ENCODE measurements at regions of chr11 and their contacts with region 1.

Region 1: DNA sequence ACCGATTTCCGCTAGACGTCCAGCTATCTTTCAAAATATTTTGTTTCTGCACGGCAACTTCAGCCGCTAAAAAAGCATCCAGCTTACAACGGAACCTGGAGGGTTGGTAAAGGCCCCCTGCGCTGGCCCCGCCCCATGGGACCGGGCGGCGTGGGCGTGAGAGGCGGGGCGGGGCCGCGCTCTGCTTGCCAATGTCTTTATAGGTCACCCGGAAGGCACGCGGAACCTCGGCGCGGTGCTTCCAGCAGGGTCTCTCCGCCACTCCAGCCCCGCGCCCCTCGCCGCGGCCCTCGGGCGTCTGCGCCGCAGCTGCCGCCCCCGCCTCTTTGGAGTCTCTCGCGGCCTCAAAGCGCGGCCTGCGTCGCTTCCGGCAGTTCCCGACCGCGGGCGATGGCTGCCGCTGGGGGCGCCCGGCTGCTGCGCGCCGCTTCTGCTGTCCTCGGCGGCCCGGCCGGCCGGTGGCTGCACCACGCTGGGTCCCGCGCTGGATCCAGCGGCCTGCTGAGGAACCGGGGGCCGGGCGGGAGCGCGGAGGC is at the start of gene FDX1:
- DNase-seq: peak; percentile 78 to 86 (median 85)
- H3K4me3 ChIP-seq: peak within 1 kb of the TSS; percentile 79
- H3K27ac ChIP-seq: peak within 1 kb of the TSS; percentile 91 to 95
- H3K4me1 ChIP-seq: peaks cover 2% of the 10 kb centered on the region
- H3K27me3 ChIP-seq: no peaks in the 10 kb centered on the region
- CTCF ChIP-seq: peak; percentile 34 to 93 (median 80)
- EP300 ChIP-seq: no peak
- POLR2A ChIP-seq: peak; percentile 42
- total RNA-seq, gene FDX1: 9.7 to 16.6 (median 13.1) TPM

Region 2: DNA sequence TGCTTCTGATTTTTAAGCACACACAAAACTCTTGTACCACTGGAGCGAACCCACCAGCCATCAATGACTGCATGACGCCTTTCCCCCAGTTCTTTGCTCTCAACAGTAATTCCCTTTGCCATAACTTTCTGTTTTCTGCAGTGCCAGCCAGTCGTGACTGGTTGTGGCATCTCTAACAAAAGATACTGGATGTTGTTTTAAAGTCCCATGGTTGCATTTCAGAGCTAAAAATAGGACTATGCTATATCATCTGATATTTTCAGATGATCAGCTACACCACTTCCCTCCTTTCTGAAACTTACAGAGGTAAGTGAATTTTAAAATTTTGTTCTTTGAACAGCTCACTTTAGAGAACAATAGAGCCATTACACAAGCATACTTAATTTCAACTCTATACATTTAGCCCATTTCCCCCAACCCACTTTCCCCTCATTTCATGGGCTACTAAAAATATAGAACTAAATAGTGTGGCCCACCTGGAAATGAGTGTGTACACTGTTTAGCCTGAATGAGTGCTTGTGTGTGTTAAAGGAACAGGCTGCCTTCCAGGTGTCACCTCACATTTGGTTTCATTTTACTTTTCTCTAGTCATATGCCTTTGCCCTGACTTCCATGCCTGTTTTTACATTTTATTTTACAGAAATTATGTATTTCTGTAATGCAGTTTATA is 473.5 kb before region 1 on chr11:
- intact Hi-C with region 1: loop called in 1 of 4 experiments (anchors 10 kb)
- DNase-seq: no peak
- H3K4me3 ChIP-seq: no peak overlapping the region
- H3K27ac ChIP-seq: no peak overlapping the region
- H3K4me1 ChIP-seq: peaks cover 4% of the 10 kb centered on the region
- H3K27me3 ChIP-seq: no peaks in the 10 kb centered on the region
- CTCF ChIP-seq: no peak
- EP300 ChIP-seq: no peak
- POLR2A ChIP-seq: no peak

Region 3: DNA sequence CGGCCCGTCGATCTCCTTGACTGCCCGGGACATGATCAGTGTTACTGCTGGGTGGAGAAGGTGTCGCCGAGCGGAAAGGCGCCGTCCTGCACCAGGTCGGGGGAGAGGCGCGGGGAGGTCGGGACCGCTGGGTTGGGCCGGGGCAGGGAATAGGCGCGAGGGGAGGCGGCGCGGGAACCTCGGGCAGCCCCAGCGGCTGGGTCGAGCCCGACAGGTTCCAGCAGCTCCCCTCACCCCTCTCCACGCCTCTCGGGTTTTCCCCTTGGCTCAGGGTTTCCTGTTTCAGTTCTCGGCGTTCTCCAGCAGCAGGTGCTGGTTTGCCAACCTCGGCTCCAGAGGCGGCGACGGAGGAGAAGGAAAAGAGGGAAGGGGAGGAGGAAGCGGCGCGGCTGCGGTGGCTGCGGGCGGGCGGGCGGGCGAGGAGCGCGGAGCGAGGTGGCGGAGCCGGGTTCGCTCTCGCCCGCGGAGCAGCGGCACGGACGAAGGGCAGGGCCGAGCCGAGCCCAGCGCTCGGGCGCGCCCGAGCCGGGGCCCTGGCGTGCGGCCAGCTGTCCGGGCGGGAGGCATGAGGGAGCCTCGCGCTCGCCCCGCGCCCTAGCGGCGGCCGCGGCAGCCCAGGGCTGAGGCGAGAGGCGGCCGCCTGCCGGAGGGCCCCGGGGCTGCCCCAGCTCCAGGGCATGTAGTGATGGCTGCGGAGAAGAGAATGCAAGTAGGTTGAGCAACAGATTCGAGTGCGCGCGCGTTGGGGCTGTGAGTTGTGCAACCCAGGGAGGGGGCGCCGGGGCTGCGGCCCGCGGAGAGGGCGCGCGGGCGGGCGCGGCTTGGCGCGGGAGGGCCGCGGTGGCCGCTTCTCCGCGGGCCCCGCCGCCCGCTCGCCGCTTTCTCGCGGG is 337.0 kb before region 1 on chr11 and contains the start of gene ZC3H12C:
- intact Hi-C with region 1: loop called in 1 of 4 experiments (anchors 10 kb)
- DNase-seq: peak; percentile 82 to 91 (median 85)
- H3K4me3 ChIP-seq: peak within 1 kb of the TSS; percentile 86
- H3K27ac ChIP-seq: peak within 1 kb of the TSS; percentile 98 to 99
- H3K4me1 ChIP-seq: peaks cover 2% of the 10 kb centered on the region
- H3K27me3 ChIP-seq: no peaks in the 10 kb centered on the region
- CTCF ChIP-seq: peak; percentile 11 to 81 (median 70)
- EP300 ChIP-seq: no peak
- POLR2A ChIP-seq: peak; percentile 72
- total RNA-seq, gene ZC3H12C: 10.2 to 21.0 (median 17.7) TPM

Region 4: GRCh38 chr11:110185121-110185591 is 244.6 kb before region 1 on chr11:
- intact Hi-C with region 1: no loop called
- DNase-seq: peak in 2 of 5 donors; percentile 28
- H3K4me3 ChIP-seq: no peak overlapping the region
- H3K27ac ChIP-seq: no peak overlapping the region
- H3K4me1 ChIP-seq: no peaks in the 10 kb centered on the region
- H3K27me3 ChIP-seq: no peaks in the 10 kb centered on the region
- CTCF ChIP-seq: no peak
- EP300 ChIP-seq: no peak
- POLR2A ChIP-seq: no peak

Region 5: DNA sequence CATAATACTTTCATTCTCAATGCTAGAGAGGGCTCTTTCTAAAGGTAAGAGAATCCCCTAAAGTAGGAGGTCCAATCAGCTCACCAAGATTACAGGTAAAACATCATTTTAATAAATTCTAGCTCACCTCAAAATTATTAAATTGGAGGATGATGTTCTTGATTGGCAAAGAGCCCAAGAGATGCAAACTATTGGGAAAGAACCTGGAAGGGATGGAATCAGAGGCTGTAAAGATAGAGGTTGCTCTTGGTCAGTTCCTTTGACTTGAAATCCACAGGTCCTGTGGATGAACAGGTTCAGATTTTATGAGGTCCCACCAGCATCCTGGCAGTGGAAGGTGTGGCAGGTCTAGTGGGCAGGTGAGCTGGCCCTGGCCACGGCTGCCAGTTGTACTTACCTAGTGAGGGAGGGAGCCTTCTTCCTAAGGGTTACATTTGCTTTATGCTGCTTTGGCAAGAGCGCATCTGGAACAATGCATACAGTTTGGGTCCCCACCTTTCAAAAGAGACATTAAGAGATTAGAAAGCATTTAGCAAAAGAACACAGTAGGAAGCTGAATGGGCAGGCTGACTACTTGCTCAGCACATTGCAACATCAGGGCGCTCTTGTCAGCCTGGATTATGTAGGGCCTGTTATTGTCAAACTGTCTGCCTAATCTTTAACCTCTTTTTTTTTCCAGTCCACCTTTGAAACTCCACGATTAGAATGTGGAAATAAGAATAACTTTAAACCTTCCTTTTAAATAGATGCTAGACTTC is 230.4 kb before region 1 on chr11:
- intact Hi-C with region 1: loop called in 3 of 4 experiments (anchors 5 kb)
- DNase-seq: no peak
- H3K4me3 ChIP-seq: no peak overlapping the region
- H3K27ac ChIP-seq: no peak overlapping the region
- H3K4me1 ChIP-seq: no peaks in the 10 kb centered on the region
- H3K27me3 ChIP-seq: no peaks in the 10 kb centered on the region
- CTCF ChIP-seq: no peak
- EP300 ChIP-seq: no peak
- POLR2A ChIP-seq: no peak

Region 6: DNA sequence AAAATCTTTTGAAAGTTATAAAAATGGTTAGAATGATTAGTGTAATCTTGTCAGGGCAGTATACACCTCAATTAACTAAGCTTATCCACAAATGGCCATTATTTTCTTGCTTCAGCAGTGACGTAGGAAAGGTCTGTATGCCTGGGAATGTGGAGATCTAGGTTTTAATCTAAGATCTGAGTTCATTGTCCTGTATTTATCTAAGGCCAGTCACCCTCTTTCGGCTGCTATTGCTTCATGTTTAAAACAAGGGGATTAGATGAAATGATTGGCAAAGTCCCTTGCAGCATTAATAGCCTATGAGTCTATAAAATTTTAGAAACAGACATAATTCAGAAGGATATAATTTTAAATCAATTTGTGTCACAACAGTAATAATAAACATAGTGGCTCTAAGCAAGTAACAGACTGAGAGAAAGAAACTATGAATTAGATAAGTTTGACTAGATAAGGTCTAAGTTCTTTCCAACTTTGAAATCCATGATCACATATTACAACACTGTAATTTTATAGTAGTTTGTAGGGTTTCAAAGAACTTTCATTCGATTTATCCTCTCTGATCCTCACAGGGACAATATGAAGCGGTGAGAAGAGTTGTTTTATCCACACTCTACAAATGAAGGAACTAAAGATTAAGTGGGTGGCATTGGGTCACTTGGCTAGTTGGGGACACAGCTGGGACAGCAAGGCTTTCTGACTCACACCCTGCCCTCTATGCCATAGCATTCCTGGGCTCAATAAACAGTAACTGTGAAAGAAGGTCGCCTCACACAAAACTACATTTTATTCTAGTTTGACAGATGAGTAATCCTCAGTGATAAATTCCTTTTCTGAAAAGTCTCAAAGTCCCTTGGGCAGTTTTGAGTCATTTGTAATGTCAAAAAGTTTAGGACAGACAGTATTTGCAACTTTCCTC is 72.8 kb before region 1 on chr11:
- intact Hi-C with region 1: no loop called
- DNase-seq: no peak
- H3K4me3 ChIP-seq: no peak overlapping the region
- H3K27ac ChIP-seq: no peak overlapping the region
- H3K4me1 ChIP-seq: peaks cover 2% of the 10 kb centered on the region
- H3K27me3 ChIP-seq: no peaks in the 10 kb centered on the region
- CTCF ChIP-seq: no peak
- EP300 ChIP-seq: no peak
- POLR2A ChIP-seq: no peak

Region 7: GRCh38 chr11:110376711-110377324 is 53.0 kb before region 1 on chr11:
- intact Hi-C with region 1: loop called in 2 of 4 experiments (anchors 5 to 10 kb)
- DNase-seq: peak; percentile 74 to 89 (median 82)
- H3K4me3 ChIP-seq: no peak overlapping the region
- H3K27ac ChIP-seq: no peak overlapping the region
- H3K4me1 ChIP-seq: peaks cover 6% of the 10 kb centered on the region
- H3K27me3 ChIP-seq: no peaks in the 10 kb centered on the region
- CTCF ChIP-seq: peak; percentile 65 to 77 (median 73)
- EP300 ChIP-seq: no peak
- POLR2A ChIP-seq: no peak